Body of pancreas (tissue), 4 donors: ENCODE measurements at regions of chr18 and their contacts with region 1.

Region 1: GRCh38 chr18:9722691-9723090 is 14.6 kb downstream of the RAB31 start:
- DNase-seq: peak; percentile 73 to 83 (median 80)
- ATAC-seq: peak; percentile 96
- H3K4me3 ChIP-seq: no peak overlapping the region
- H3K27ac ChIP-seq: no peak overlapping the region
- H3K4me1 ChIP-seq: no peaks in the 10 kb centered on the region
- H3K27me3 ChIP-seq: no peaks in the 10 kb centered on the region
- CTCF ChIP-seq: peak; percentile 49 to 88 (median 84)
- POLR2A ChIP-seq: no peak

Region 2: DNA sequence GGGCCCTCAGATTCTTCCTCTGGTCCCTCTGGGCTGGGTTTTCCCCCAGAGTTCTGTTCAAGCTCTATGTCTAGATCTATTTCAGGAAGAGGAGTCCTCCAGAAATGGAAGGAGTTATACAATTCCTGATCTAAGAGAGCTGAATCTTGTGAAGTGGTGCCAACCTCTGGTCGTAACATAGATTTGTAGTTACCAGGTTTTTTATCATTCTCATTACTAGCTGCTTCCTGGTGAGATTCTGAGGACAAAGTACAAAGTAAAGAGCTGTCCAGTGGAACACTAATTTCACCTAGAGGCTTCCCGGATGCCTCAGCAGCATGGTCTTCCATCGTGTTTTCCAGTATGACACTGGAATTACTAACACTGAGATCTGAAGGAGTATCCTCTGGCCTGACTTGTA is 152.4 kb before region 1 on chr18:
- intact Hi-C with region 1: no loop called
- DNase-seq: no peak
- ATAC-seq: no peak
- H3K4me3 ChIP-seq: no peak overlapping the region
- H3K27ac ChIP-seq: no peak overlapping the region
- H3K4me1 ChIP-seq: no peaks in the 10 kb centered on the region
- H3K27me3 ChIP-seq: no peaks in the 10 kb centered on the region
- CTCF ChIP-seq: no peak
- POLR2A ChIP-seq: no peak

Region 3: GRCh38 chr18:9587924-9588323 is 134.8 kb before region 1 on chr18:
- intact Hi-C with region 1: loop called (anchors 10 kb)
- DNase-seq: no peak
- ATAC-seq: no peak
- H3K4me3 ChIP-seq: no peak overlapping the region
- H3K27ac ChIP-seq: no peak overlapping the region
- H3K4me1 ChIP-seq: no peaks in the 10 kb centered on the region
- H3K27me3 ChIP-seq: no peaks in the 10 kb centered on the region
- CTCF ChIP-seq: no peak
- POLR2A ChIP-seq: no peak